Posterior vena cava (tissue), 2 donors: ENCODE measurements at regions of chr22 and their contacts with region 1.

Region 1: DNA sequence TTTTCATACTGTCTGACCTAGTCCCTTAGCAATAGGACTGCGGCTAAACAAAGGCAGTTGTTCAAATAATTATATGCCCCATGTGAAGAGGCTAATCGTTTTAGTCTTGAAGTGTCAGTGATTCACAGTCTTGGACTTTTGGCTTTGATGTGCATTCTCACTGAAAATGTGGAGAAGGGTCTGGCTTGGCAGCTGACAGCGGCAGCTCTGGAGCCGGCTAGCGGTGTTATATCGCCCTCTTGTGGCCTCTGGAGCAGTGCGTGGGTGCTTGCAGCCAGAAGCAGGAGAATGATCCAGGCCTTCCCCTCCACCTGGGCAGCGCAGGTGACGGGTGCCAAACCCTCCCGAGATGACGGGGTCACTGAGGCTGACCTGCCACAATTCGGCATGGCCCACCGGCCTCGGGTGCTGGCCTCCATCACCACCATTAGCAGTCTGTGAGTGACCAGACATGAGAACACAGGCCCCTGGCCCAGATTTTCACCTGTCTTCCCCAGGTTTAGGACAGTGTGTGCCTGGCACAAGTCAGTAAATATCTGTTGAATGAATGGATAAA is 90.3 kb upstream of the PITPNB start:
- DNase-seq: peak; percentile 93

Region 2: GRCh38 chr22:26756675-26757293 is 1252.6 kb before region 1 on chr22:
- intact Hi-C with region 1: loop called in 1 of 2 experiments (anchors 10 kb)
- DNase-seq: peak; percentile 89

Region 3: GRCh38 chr22:27801197-27801615 is 208.1 kb before region 1 on chr22:
- intact Hi-C with region 1: no loop called
- DNase-seq: no peak

Region 4: GRCh38 chr22:27880778-27881394 is 128.5 kb before region 1 on chr22:
- intact Hi-C with region 1: loop called (anchors 5 to 10 kb)
- DNase-seq: no peak

Region 5: GRCh38 chr22:27885977-27886842 is 123.1 kb before region 1 on chr22:
- intact Hi-C with region 1: loop called (anchors 5 to 10 kb)
- DNase-seq: no peak

Region 6: DNA sequence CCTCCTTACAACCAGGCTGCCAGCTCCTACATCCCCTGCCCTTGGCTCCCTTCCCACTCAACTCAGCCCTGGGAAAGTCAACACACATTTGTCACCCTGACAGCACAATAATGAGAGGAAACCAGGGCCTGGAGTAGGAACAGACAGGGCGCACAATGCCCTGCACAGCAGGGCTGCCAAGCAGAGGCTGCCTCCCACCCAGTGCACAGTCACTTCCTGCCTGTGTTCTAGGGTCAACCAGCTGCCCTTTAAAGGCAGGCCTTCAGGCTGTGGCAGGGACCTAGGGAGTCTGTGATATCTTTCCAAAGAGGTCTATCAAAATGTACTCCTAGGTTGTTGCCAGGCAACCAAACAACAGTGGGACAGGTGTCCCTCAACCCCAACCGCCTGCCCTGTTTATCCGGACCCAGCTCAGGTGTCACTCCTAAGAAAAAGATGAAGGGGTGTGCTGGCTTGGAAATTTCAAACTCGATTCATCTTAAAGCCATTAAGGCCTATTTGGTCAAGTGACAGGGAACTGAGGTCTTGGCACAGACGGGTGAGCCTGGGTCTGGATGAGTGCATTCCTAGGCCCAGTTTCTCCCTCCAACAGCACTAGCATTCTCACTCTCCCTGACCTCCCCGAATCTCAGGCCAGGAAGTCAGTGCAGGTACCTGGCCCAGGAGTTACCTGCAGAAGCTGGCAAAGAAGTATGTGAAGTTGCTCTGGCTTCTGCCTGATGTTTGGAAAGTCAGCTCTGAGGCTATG is 20.0 kb after region 1 on chr22:
- intact Hi-C with region 1: no loop called
- DNase-seq: no peak